B cell (primary cell): ENCODE measurements at regions of chr13 and their contacts with region 1.

Region 1: GRCh38 chr13:98653463-98653985 is 76.6 kb upstream of the STK24 start:
- DNase-seq: peak; percentile 78
- ATAC-seq: peak; percentile 85
- H3K4me3 ChIP-seq: no peak overlapping the region
- H3K4me3 Mint-ChIP-seq: peak overlapping the region; percentile 44
- H3K27ac ChIP-seq: no peak overlapping the region
- H3K27ac Mint-ChIP-seq: peak overlapping the region; percentile 42
- H3K4me1 ChIP-seq: peaks cover 0 to 5% of the 10 kb centered on the region in 2 donors
- H3K4me1 Mint-ChIP-seq: peaks cover 5% of the 10 kb centered on the region
- H3K27me3 ChIP-seq: peaks cover 0 to 3% (median 2%) of the 10 kb centered on the region in 4 experiments
- H3K27me3 Mint-ChIP-seq: peaks cover 7% of the 10 kb centered on the region
- CTCF ChIP-seq: peak; percentile 87

Region 2: DNA sequence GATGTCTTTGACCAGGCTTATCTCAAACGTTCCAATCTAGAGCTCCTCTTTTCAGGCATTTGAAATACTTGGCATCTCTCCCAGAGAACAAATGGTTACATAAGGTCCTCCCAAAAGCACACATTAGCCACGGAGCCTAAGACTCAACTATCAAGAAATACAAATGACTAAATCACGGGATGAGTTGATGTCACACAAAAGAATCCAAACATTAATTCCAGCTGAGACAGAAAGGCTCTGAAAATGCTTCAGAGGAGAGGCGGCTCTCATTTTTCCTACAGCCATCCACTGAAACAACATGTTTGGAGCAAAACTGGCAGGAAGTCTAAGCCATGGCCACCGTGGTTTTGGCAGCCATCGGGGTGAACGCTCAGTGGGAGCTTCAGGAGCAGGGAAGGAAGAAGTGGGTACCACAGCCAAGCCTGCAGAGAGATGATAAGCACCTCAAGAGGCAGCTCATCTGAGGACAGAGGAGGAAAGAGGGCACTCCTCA is 199.1 kb before region 1 on chr13:
- CTCF ChIA-PET with region 1: interaction called, 23 read pairs
- POLR2A ChIA-PET with region 1: no interaction called
- intact Hi-C with region 1: no loop called
- DNase-seq: no peak
- ATAC-seq: no peak
- H3K4me3 ChIP-seq: no peak overlapping the region
- H3K4me3 Mint-ChIP-seq: no peak overlapping the region
- H3K27ac ChIP-seq: peak overlapping the region in 1 of 2 donors; percentile 2
- H3K27ac Mint-ChIP-seq: no peak overlapping the region
- H3K4me1 ChIP-seq: no peaks in the 10 kb centered on the region
- H3K4me1 Mint-ChIP-seq: peaks cover 1% of the 10 kb centered on the region
- H3K27me3 ChIP-seq: no peaks in the 10 kb centered on the region
- H3K27me3 Mint-ChIP-seq: no peaks in the 10 kb centered on the region
- CTCF ChIP-seq: no peak

Region 3: DNA sequence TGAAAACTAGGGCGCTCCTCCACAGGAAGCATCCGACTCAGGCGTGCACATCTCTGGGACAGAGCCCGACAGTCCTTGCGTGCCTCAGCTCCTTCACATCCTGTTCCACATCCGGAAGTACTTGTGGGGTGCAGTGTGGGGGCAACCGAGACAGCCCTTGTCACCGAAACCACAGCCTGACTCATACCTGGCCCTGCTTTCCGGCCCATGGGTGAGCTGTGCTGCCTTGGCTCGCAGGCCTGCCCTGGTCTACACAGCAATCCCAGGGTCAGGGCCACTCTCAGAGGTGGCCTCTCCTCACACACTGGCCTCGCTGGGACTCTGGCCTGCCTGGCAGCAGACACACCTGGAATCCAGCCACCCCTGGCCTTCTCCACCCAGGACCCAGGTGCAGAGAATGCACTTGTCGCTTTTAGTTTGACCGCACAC is 177.0 kb before region 1 on chr13:
- CTCF ChIA-PET with region 1: interaction called, 40 read pairs
- POLR2A ChIA-PET with region 1: no interaction called
- intact Hi-C with region 1: loop called (anchors 1 kb)
- DNase-seq: peak; percentile 71
- ATAC-seq: peak; percentile 94
- H3K4me3 ChIP-seq: peak overlapping the region in 2 of 5 experiments; percentile 0 to 2
- H3K4me3 Mint-ChIP-seq: peak overlapping the region; percentile 76
- H3K27ac ChIP-seq: peak overlapping the region; percentile 33 to 76
- H3K27ac Mint-ChIP-seq: peak overlapping the region; percentile 85
- H3K4me1 ChIP-seq: peaks cover 38 to 42% of the 10 kb centered on the region in 2 donors
- H3K4me1 Mint-ChIP-seq: peaks cover 45% of the 10 kb centered on the region
- H3K27me3 ChIP-seq: no peaks in the 10 kb centered on the region
- H3K27me3 Mint-ChIP-seq: no peaks in the 10 kb centered on the region
- CTCF ChIP-seq: no peak

Region 4: GRCh38 chr13:98509271-98510155 is 144.0 kb before region 1 on chr13:
- CTCF ChIA-PET with region 1: interaction called, 10 read pairs
- POLR2A ChIA-PET with region 1: no interaction called
- intact Hi-C with region 1: no loop called
- DNase-seq: peak; percentile 81
- ATAC-seq: peak; percentile 81
- H3K4me3 ChIP-seq: peak overlapping the region in 3 of 5 experiments; percentile 2 to 49 (median 18)
- H3K4me3 Mint-ChIP-seq: peak overlapping the region; percentile 69
- H3K27ac ChIP-seq: peak overlapping the region; percentile 80 to 94
- H3K27ac Mint-ChIP-seq: peak overlapping the region; percentile 97
- H3K4me1 ChIP-seq: peaks cover 80 to 94% of the 10 kb centered on the region in 2 donors
- H3K4me1 Mint-ChIP-seq: peaks cover 98% of the 10 kb centered on the region
- H3K27me3 ChIP-seq: no peaks in the 10 kb centered on the region
- H3K27me3 Mint-ChIP-seq: no peaks in the 10 kb centered on the region
- CTCF ChIP-seq: no peak

Region 5: DNA sequence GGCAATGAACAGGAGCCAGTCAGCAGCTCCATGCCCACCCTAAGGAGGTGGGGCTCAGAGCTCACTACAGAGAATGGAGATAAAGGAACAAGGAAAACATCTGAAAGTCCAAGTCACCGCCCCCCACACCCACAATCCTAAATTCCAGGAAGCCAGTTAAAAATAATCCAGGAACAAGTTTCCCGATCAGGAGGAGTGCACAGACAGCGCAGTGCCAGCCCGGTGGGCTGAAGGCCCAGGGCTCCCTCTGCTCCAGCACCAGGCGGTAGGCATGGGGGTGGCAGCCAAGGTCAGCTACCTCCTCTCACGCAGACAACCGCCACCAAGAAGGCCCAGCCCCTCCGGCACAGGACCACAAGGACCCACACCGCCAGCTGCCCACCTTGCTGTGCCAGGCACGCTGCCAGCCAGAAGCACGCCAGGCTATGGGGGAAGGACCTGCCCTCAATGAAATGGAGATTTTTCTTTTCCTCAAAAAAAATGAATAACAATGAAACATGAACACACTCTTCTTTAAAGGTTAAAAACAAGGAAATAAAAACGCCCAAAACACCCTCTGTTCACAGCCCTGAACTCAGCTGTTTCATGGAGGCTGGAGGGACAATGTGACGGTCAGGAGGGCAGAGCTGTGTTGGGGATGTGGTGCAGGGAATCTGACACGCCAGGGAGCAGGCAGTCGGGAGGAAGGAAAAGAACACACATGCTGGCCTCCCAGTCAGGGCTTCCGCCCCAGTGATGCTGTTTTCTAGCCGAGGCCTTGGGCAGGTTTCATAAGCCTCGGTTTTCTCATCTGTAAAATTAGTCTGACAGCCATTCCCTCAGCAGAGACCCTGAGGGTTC is 87.6 kb before region 1 on chr13:
- CTCF ChIA-PET with region 1: interaction called, 11 read pairs
- POLR2A ChIA-PET with region 1: no interaction called
- intact Hi-C with region 1: no loop called
- DNase-seq: no peak
- ATAC-seq: no peak
- H3K4me3 ChIP-seq: no peak overlapping the region
- H3K4me3 Mint-ChIP-seq: peak overlapping the region; percentile 76
- H3K27ac ChIP-seq: peak overlapping the region; percentile 68 to 78
- H3K27ac Mint-ChIP-seq: peak overlapping the region; percentile 92
- H3K4me1 ChIP-seq: peaks cover 77 to 86% of the 10 kb centered on the region in 2 donors
- H3K4me1 Mint-ChIP-seq: peaks cover 90% of the 10 kb centered on the region
- H3K27me3 ChIP-seq: no peaks in the 10 kb centered on the region
- H3K27me3 Mint-ChIP-seq: no peaks in the 10 kb centered on the region
- CTCF ChIP-seq: no peak

Region 6: DNA sequence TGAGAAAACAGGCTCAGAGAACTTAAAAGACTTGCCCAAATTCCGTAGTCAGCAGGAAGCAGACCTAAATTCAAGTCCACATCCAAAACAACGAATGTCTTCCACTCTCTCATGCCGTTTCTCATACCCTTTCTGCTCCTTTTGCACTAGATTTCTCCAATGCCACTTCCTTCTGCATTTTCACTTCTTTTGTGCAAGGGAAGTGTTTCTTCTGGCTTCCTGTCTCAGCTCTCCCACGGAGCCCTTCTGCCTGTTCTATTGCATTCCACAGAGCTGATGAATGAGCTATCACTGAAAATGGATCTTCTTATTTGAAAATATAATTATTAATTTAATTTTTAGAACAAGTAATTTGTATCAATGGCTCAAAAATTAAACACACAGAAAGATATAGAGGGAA is 20.6 kb before region 1 on chr13:
- CTCF ChIA-PET with region 1: interaction called, 15 read pairs
- POLR2A ChIA-PET with region 1: no interaction called
- intact Hi-C with region 1: no loop called
- DNase-seq: no peak
- ATAC-seq: no peak
- H3K4me3 ChIP-seq: no peak overlapping the region
- H3K4me3 Mint-ChIP-seq: no peak overlapping the region
- H3K27ac ChIP-seq: no peak overlapping the region
- H3K27ac Mint-ChIP-seq: no peak overlapping the region
- H3K4me1 ChIP-seq: no peaks in the 10 kb centered on the region
- H3K4me1 Mint-ChIP-seq: no peaks in the 10 kb centered on the region
- H3K27me3 ChIP-seq: peaks cover 0 to 4% (median 1%) of the 10 kb centered on the region in 4 experiments
- H3K27me3 Mint-ChIP-seq: peaks cover 21% of the 10 kb centered on the region
- CTCF ChIP-seq: no peak

Region 7: GRCh38 chr13:99542788-99543406 is 889.4 kb after region 1 on chr13:
- CTCF ChIA-PET with region 1: no interaction called
- POLR2A ChIA-PET with region 1: no interaction called
- intact Hi-C with region 1: no loop called
- DNase-seq: peak; percentile 93
- ATAC-seq: peak; percentile 97
- H3K4me3 ChIP-seq: peak overlapping the region in 2 of 5 experiments; percentile 10 to 49
- H3K4me3 Mint-ChIP-seq: peak overlapping the region; percentile 56
- H3K27ac ChIP-seq: peak overlapping the region; percentile 83 to 89
- H3K27ac Mint-ChIP-seq: peak overlapping the region; percentile 89
- H3K4me1 ChIP-seq: peaks cover 31 to 53% of the 10 kb centered on the region in 2 donors
- H3K4me1 Mint-ChIP-seq: peaks cover 50% of the 10 kb centered on the region
- H3K27me3 ChIP-seq: no peaks in the 10 kb centered on the region
- H3K27me3 Mint-ChIP-seq: no peaks in the 10 kb centered on the region
- CTCF ChIP-seq: no peak